ENCODE measurements at regions of chr17 and their contacts with region 1.

Region 1: DNA sequence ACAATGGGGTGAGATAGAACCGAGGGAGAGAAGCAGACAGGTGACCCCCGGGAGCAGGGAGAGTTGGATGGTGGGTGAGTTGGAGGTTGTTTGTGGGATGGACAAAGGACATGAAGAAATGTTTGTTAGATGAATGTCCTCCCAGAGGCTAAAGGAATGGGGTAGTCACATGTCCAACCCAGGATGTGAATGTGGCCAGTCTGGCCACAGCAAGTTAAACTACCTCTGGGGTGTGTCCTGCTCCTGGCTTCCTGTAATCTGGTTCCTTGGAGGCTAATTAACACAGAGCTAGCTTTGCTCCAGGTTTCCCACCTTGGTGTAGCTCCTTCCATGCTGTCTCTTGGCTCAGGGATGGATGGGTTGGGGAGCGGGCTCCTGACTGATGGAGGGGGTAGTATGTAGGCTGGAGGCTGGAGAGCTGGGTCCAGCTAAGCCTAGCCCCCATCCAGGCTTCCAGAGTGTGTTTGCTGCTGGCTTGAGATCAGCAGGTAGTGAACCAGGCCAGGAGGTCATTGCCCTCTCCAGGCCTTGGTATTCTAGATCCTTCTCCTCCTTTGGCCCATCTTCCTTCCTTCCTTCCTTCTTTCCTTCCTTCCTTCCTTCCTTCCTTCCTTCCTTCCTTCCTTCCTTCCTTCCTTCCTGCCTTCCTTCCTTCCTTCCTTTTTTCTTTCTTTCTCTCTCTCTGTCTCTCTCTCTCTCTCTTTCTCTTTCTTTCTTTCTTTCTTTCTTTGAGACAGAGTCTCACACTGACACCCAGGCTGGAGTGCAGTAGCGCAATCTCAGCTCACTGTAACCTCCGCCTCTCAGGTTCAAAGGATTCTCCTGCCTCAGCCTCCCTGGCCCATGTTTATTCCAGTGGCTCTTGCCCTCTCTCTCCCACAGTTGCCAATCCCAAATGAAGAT is 28.0 kb upstream of the UBE2G1 start:
- DNase-seq: no peak
- ATAC-seq: no peak
- H3K4me3 ChIP-seq: peak overlapping the region; percentile 49
- H3K27ac ChIP-seq: peak overlapping the region; percentile 98
- H3K4me1 ChIP-seq: peaks cover 48% of the 10 kb centered on the region
- H3K27me3 ChIP-seq: no peaks in the 10 kb centered on the region
- CTCF ChIP-seq: no peak
- EP300 ChIP-seq: no peak
- POLR2A ChIP-seq: no peak
- RAD21 ChIP-seq: no peak

Region 2: GRCh38 chr17:4206962-4207361 is 187.5 kb before region 1 on chr17:
- CTCF ChIA-PET with region 1: no interaction called
- POLR2A ChIA-PET with region 1: no interaction called
- RAD21 ChIA-PET with region 1: no interaction called
- SMC1A ChIA-PET with region 1: no interaction called
- in situ Hi-C with region 1: no loop called
- intact Hi-C with region 1: no loop called
- DNase-seq: no peak
- ATAC-seq: no peak
- H3K4me3 ChIP-seq: no peak overlapping the region
- H3K27ac ChIP-seq: no peak overlapping the region
- H3K4me1 ChIP-seq: peaks cover 11% of the 10 kb centered on the region
- H3K27me3 ChIP-seq: no peaks in the 10 kb centered on the region
- CTCF ChIP-seq: no peak
- EP300 ChIP-seq: no peak
- POLR2A ChIP-seq: no peak
- RAD21 ChIP-seq: no peak

Region 3: GRCh38 chr17:4304417-4305027 is 89.9 kb before region 1 on chr17:
- CTCF ChIA-PET with region 1: interaction called, 4 read pairs
- POLR2A ChIA-PET with region 1: no interaction called
- RAD21 ChIA-PET with region 1: interaction called, 3 read pairs
- SMC1A ChIA-PET with region 1: interaction called, 3 read pairs
- in situ Hi-C with region 1: no loop called
- intact Hi-C with region 1: loop called (anchors 5 kb)
- DNase-seq: no peak
- ATAC-seq: peak; percentile 96
- H3K4me3 ChIP-seq: no peak overlapping the region
- H3K27ac ChIP-seq: no peak overlapping the region
- H3K4me1 ChIP-seq: peaks cover 3% of the 10 kb centered on the region; the same call in 1 of the 2 replicates
- H3K27me3 ChIP-seq: no peaks in the 10 kb centered on the region
- CTCF ChIP-seq: peak; percentile 60 to 72 (median 62)
- EP300 ChIP-seq: no peak
- POLR2A ChIP-seq: no peak
- RAD21 ChIP-seq: peak; percentile 51

Region 4: DNA sequence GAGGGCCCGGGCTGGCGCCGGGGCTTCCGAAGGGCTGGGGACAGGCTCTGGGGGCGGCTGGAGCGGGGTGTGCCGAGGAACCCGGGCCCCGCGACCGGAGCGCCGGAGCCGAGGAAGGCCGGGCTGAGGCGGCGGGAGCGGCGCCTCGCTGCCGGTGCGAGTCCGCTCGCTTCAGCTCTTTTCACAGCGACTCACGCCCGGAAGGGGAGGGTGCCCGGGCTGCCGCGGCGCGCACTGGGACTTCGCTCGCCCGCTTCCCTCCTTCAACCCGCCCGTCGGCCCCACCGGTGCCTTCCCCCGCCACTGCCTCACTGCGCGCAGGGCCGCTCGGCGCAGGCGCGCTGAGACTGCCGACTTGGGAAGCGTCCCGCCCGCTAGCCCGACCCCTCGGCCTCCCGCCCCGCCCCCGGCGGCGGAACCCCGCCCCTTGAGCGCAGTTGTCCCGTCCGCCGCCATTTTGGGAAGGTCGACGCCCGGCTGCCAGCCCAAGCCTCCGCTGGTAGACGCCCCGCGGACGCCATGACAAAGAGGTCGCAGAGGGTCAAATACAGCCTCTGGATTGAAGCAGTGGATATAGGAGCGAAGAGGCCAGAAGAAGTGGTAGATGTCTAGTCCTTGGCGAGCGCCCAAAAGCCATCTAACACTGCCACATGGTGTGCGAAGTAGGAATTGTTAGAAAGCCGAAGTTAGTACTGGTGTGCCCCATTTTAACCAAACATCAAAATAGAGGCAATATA is 28.0 kb before region 1 on chr17 and contains the start of gene UBE2G1:
- CTCF ChIA-PET with region 1: interaction called, 3 read pairs
- POLR2A ChIA-PET with region 1: interaction called, 5 read pairs
- RAD21 ChIA-PET with region 1: interaction called, 4 read pairs
- SMC1A ChIA-PET with region 1: interaction called, 5 read pairs
- in situ Hi-C with region 1: no loop called
- intact Hi-C with region 1: loop called (anchors 2 kb)
- DNase-seq: peak; percentile 89
- ATAC-seq: peak; percentile 89
- H3K4me3 ChIP-seq: peak within 1 kb of the TSS; percentile 66
- H3K27ac ChIP-seq: peak within 1 kb of the TSS; percentile 88
- H3K4me1 ChIP-seq: peaks cover 10% of the 10 kb centered on the region
- H3K27me3 ChIP-seq: no peaks in the 10 kb centered on the region
- CTCF ChIP-seq: peak; percentile 26 to 50 (median 34); a peak in 4 of 6 replicates
- EP300 ChIP-seq: no peak
- POLR2A ChIP-seq: peak; percentile 91
- RAD21 ChIP-seq: peak; percentile 61
- polyA plus RNA-seq, gene UBE2G1: 24.4 to 35.2 TPM

Region 5: DNA sequence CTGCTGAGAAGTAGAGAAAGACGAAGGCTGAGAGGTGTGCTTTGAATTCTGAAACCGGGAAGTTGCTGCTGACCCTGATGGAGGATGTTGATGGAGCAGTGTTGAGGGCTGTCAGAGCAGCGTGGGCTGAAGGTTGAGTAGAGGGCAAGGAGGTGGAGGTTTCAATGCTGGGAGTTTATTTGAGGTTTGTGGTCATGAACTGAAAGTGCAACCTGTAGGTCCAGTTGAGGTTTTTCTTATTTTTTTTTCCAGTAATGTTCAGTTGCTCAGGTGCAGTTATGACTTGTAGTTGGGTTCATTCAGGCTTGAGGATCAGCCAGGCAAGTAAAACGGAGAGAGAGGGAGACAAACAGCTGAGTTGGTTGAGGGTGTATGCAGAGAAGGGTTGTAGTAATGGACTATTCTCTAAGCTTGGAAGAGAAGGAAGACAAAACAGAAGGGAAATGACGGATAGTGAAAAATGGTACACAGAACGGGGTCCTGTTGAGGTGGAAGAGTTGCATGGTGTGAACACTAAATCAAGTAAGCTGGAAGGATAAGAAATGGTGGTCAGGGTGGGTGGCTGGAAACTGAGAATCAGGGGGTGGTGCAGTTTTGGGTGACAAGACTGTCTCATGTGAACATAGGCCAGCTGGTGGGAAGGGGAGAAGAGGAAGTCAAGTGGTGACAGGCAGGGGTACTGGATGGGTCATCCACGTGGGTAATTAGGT is 19.3 kb before region 1 on chr17:
- CTCF ChIA-PET with region 1: interaction called, 37 read pairs
- POLR2A ChIA-PET with region 1: interaction called, 14 read pairs
- RAD21 ChIA-PET with region 1: interaction called, 61 read pairs
- SMC1A ChIA-PET with region 1: interaction called, 40 read pairs
- in situ Hi-C with region 1: no loop called
- intact Hi-C with region 1: loop called (anchors 1 kb)
- DNase-seq: peak; percentile 98
- ATAC-seq: peak; percentile 82
- H3K4me3 ChIP-seq: peak overlapping the region; percentile 8; the same call in 1 of the 2 replicates
- H3K27ac ChIP-seq: peak overlapping the region; percentile 85
- H3K4me1 ChIP-seq: peaks cover 45% of the 10 kb centered on the region
- H3K27me3 ChIP-seq: no peaks in the 10 kb centered on the region
- CTCF ChIP-seq: no peak
- EP300 ChIP-seq: peak; percentile 93 to 96
- POLR2A ChIP-seq: peak; percentile 42; the same call in 1 of the 2 replicates
- RAD21 ChIP-seq: no peak

Measured in GM12878 (cell line).